ENCODE measurements at regions of chr3 and their contacts with region 1.

Region 1: DNA sequence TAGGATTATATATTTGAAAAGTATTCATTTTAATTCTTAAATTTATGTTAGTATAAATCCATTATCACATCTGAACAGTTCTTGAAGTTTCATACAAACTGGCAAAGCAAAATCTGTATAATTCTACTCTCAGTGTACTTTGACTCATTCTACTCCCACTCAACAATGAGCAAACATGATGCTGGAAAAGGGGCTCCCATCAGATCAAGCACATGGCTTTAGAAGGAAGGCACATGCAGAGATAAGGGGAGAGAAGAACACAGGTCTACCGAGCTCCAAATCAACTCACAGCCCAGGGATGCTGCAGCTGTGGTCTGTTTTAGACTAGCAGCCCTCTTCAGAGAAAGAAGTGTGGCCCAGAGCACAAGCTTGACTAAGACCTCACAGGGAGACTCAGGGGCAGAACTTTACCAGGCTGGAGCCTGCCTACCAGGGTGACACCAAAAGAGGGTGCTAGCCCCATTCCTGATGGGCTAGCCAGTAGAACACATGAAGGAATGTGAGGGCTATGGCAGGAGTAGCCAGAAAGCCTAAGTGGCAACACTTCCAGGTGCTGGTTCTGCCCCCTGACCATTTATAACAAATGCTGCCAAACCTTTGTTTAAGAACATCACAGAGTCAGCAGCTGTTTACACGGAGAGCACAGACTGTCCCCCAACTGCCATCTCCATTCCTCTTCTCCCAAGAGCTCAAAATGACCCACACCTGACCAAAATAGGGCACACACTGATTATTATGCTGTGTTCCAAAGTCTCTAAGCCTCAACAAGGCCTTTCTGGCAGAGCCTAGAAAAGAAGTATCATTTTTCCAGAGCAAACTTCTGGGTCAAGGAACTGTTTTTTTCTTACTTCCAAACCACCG is 19.5 kb downstream of the SEC22C start:
- DNase-seq: no peak
- ATAC-seq: no peak

Region 2: GRCh38 chr3:42510325-42510724 is 52.0 kb before region 1 on chr3:
- intact Hi-C with region 1: loop called (anchors 5 kb)
- DNase-seq: peak; percentile 34
- ATAC-seq: no peak